SK-N-SH (cell line): ENCODE measurements at regions of chr5 and their contacts with region 1.

Region 1: DNA sequence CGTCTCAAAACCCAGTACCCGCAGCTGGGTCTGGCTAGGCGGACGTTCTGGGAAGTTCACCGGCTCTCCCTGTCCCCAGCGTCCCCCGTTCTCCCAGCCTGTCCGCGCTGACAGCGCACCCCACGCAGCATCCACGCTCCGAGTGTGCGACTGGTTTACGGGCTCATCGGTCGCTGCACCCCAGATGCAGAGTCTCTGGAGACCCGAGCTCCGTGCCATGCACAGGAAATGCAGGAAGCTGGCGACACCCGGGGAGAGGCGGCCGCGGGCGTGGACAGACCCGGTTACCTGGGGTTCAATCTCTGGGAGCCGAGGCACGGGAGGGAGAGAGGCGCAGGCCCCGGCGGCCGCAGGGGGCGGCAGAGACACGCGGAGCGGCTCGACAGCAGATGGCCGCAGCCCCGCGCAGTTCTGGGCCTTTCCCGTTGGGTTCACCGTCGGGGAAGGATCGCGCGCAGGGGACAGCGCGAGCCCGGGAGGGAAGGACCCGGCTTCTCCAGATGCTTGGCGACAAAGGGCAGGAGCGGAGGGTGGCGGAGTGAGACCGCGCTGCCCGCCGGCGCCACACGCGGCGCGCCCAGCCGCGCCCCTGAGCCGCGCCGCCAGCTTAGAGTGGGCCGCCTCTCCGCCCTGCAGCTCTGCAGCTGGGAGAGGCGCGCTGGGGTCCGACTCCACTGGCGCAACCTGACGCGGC is 558 bp downstream of the SHROOM1 start:
- DNase-seq: peak; percentile 97
- H3K4me3 ChIP-seq: peak overlapping the region; percentile 65 to 71
- H3K27ac ChIP-seq: no peak overlapping the region
- H3K4me1 ChIP-seq: peaks cover 0 to 5% of the 10 kb centered on the region in 2 experiments; a peak in 1 of 4 replicates
- H3K27me3 ChIP-seq: no peaks in the 10 kb centered on the region
- CTCF ChIP-seq: peak; percentile 78
- EP300 ChIP-seq: no peak
- RAD21 ChIP-seq: peak; percentile 75

Region 2: GRCh38 chr5:132677191-132677590 is 152.7 kb before region 1 on chr5:
- CTCF ChIA-PET with region 1: no interaction called
- POLR2A ChIA-PET with region 1: no interaction called
- DNase-seq: no peak
- H3K4me3 ChIP-seq: no peak overlapping the region
- H3K27ac ChIP-seq: peak overlapping the region in 1 of 2 experiments; percentile 68; a peak in 2 of 4 replicates
- H3K4me1 ChIP-seq: peaks cover 0 to 26% of the 10 kb centered on the region in 2 experiments; a peak in 3 of 4 replicates
- H3K27me3 ChIP-seq: no peaks in the 10 kb centered on the region
- CTCF ChIP-seq: peak; percentile 64
- EP300 ChIP-seq: no peak; a peak in 1 of 4 replicates
- RAD21 ChIP-seq: no peak; the same call in 1 of the 2 replicates

Region 3: GRCh38 chr5:132753135-132753987 is 76.5 kb before region 1 on chr5:
- CTCF ChIA-PET with region 1: interaction called, 19 read pairs
- POLR2A ChIA-PET with region 1: no interaction called
- DNase-seq: peak; percentile 47
- H3K4me3 ChIP-seq: no peak overlapping the region
- H3K27ac ChIP-seq: no peak overlapping the region
- H3K4me1 ChIP-seq: no peaks in the 10 kb centered on the region
- H3K27me3 ChIP-seq: no peaks in the 10 kb centered on the region
- CTCF ChIP-seq: peak; percentile 42
- EP300 ChIP-seq: no peak
- RAD21 ChIP-seq: peak; percentile 58

Region 4: DNA sequence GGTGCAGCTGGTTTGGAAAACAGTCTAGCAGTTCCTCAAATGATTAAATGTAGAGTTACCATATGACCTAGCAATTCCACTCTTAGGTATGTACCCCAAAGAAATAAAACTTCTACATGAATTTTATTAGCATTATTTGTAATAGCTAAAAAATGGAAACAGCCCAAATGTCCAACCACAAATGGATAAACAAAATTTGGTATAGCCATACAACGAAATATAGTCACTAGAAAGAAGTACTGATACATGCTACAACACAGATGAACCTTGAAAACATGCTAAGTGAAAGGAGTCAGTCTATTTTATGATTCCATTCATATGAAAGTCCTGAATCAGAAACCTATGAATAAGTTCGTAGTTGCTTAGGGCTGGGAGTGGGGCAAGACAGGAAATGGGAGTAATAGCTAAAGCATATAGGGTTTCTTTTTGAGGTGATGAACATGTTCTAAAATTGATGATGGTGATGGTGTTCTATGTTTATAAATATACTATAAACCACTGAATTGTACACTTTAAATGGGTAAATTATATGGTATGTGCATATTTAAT is 30.1 kb after region 1 on chr5:
- CTCF ChIA-PET with region 1: interaction called, 75 read pairs
- POLR2A ChIA-PET with region 1: no interaction called
- DNase-seq: no peak
- H3K4me3 ChIP-seq: no peak overlapping the region
- H3K27ac ChIP-seq: no peak overlapping the region
- H3K4me1 ChIP-seq: no peaks in the 10 kb centered on the region
- H3K27me3 ChIP-seq: no peaks in the 10 kb centered on the region
- CTCF ChIP-seq: no peak
- EP300 ChIP-seq: no peak
- RAD21 ChIP-seq: no peak

Region 5: GRCh38 chr5:132883261-132883834 is 53.5 kb after region 1 on chr5:
- CTCF ChIA-PET with region 1: interaction called, 43 read pairs
- POLR2A ChIA-PET with region 1: no interaction called
- DNase-seq: peak; percentile 53
- H3K4me3 ChIP-seq: no peak overlapping the region
- H3K27ac ChIP-seq: peak overlapping the region in 1 of 2 experiments; percentile 32; a peak in 2 of 4 replicates
- H3K4me1 ChIP-seq: no peaks in the 10 kb centered on the region; a peak in 1 of 4 replicates
- H3K27me3 ChIP-seq: no peaks in the 10 kb centered on the region
- CTCF ChIP-seq: peak; percentile 73
- EP300 ChIP-seq: no peak
- RAD21 ChIP-seq: peak; percentile 65